ENCODE measurements at regions of chr7 and their contacts with region 1.

Region 1: DNA sequence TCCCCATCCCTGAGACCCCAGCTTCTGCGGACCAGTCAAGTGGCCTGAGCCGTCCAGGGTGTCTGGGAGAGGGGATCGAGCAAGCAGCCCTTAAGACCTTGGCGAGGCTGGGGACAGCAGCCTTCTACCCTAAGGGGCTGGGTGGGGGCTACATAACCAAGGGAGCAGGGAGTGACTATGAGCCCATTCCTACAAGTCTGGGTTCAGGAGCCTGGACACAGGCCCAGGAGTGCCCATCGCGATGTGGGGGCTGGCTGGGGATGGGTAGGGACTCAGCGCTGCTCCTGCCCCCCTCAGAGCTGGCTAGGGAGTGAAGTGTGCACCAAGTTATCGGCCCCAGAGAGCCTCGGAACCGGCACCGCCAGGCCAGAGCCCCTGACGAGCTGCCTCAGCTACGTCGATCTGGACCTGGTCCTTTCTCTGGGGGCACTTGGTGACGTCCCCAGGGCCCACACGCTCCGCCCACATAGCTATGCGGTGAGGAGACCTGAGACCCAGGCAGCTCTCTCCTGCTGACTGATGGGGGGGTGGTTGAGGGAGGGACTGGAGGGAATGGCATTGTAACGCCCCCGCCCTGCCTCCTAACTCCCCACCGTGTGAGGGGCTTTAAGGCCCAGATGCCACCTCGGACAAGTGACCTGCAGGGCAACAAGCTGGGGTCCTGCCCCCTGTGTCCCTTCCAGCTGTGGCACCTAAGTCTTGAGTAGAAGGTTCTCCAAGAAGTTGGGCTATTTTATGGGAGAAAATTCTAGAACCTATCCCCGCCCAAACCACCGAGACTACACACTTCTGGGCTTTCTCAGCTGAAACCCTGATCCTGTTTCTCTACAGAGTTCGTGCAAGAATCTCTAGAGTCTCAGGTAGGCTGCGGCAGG is 2.5 kb downstream of the SAP25 start:
- DNase-seq: peak in 1 of 5 donors; percentile 27
- H3K4me3 ChIP-seq: no peak overlapping the region
- H3K27ac ChIP-seq: no peak overlapping the region
- H3K4me1 ChIP-seq: peaks cover 15% of the 10 kb centered on the region
- H3K27me3 ChIP-seq: no peaks in the 10 kb centered on the region
- CTCF ChIP-seq: no peak
- EP300 ChIP-seq: no peak
- POLR2A ChIP-seq: no peak

Region 2: GRCh38 chr7:100101016-100101862 is 470.0 kb before region 1 on chr7 and contains the starts of genes AP4M1 and MCM7:
- intact Hi-C with region 1: no loop called
- DNase-seq: peak; percentile 97 to 98 (median 98)
- H3K4me3 ChIP-seq: peak within 1 kb of the TSS; percentile 85
- H3K27ac ChIP-seq: peak within 1 kb of the TSS; percentile 78 to 91
- H3K4me1 ChIP-seq: no peaks in the 10 kb centered on the region
- H3K27me3 ChIP-seq: no peaks in the 10 kb centered on the region
- CTCF ChIP-seq: no peak
- EP300 ChIP-seq: no peak
- POLR2A ChIP-seq: peak; percentile 5
- total RNA-seq, gene AP4M1: 10.9 to 20.3 (median 14.2) TPM
- total RNA-seq, gene MCM7: 24.4 to 57.6 (median 37.9) TPM

Region 3: GRCh38 chr7:100545360-100546128 is 25.6 kb before region 1 on chr7:
- intact Hi-C with region 1: loop called in 1 of 4 experiments (anchors 2 kb)
- DNase-seq: peak; percentile 69 to 87 (median 74)
- H3K4me3 ChIP-seq: no peak overlapping the region
- H3K27ac ChIP-seq: peak overlapping the region; percentile 82 to 86
- H3K4me1 ChIP-seq: peaks cover 50% of the 10 kb centered on the region
- H3K27me3 ChIP-seq: no peaks in the 10 kb centered on the region
- CTCF ChIP-seq: peak in 1 of 3 donors; percentile 23
- EP300 ChIP-seq: no peak
- POLR2A ChIP-seq: no peak

Region 4: DNA sequence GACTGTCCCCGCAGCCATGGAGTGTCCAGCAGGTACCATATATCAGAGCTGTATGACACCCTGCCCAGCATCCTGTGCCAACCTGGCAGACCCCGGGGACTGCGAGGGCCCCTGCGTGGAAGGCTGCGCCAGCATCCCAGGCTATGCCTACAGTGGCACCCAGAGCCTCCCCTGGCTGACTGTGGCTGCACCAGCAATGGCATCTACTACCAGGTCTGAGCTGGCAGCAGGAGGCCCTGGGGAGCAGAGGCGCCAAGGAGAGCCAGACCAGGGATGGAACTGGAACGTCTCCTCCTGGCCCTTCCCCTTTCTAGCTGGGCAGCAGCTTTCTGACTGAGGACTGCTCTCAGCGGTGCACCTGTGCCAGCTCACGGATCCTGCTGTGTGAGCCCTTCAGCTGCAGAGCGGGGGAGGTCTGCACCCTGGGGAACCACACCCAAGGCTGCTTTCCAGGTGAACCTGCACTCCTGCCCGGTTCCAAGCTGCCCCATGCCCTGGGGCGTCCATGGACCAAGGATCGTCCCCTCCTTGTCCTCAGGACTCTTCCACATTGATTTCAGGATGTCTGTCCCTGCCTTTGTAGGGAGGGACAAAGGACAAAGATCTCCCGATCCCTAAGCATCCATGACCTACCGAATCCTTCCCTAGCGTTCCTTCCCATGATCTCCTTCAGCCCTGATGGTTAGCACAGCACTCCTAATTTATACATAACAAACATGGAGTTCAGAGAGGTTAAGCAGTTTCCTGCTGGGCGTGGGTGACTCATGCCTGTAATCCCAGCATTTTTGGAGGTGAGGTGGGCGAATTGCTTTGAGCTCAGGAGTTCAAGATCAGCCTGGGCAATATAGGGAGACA is 222.8 kb after region 1 on chr7:
- intact Hi-C with region 1: no loop called
- DNase-seq: no peak
- H3K4me3 ChIP-seq: no peak overlapping the region
- H3K27ac ChIP-seq: no peak overlapping the region
- H3K4me1 ChIP-seq: no peaks in the 10 kb centered on the region
- H3K27me3 ChIP-seq: no peaks in the 10 kb centered on the region
- CTCF ChIP-seq: no peak
- EP300 ChIP-seq: no peak
- POLR2A ChIP-seq: no peak